ENCODE measurements at regions of chr4 and their contacts with region 1.

Region 1: GRCh38 chr4:132642016-132642817 is 506.9 kb upstream of the PCDH10 start:
- DNase-seq: peak; percentile 38 to 42
- H3K4me3 ChIP-seq: no peak overlapping the region
- H3K4me3 Mint-ChIP-seq: no peak overlapping the region
- H3K27ac Mint-ChIP-seq: no peak overlapping the region
- H3K4me1 ChIP-seq: no peaks in the 10 kb centered on the region
- H3K4me1 Mint-ChIP-seq: no peaks in the 10 kb centered on the region
- H3K27me3 ChIP-seq: no peaks in the 10 kb centered on the region
- H3K27me3 Mint-ChIP-seq: no peaks in the 10 kb centered on the region
- CTCF ChIP-seq: peak; percentile 68 to 78

Region 2: GRCh38 chr4:132076829-132077228 is 565.4 kb before region 1 on chr4:
- CTCF ChIA-PET with region 1: no interaction called
- POLR2A ChIA-PET with region 1: no interaction called
- intact Hi-C with region 1: loop called (anchors 5 kb)
- DNase-seq: no peak
- H3K4me3 ChIP-seq: no peak overlapping the region
- H3K4me3 Mint-ChIP-seq: no peak overlapping the region
- H3K27ac Mint-ChIP-seq: no peak overlapping the region
- H3K4me1 ChIP-seq: no peaks in the 10 kb centered on the region
- H3K4me1 Mint-ChIP-seq: no peaks in the 10 kb centered on the region
- H3K27me3 ChIP-seq: no peaks in the 10 kb centered on the region
- H3K27me3 Mint-ChIP-seq: no peaks in the 10 kb centered on the region
- CTCF ChIP-seq: peak in 1 of 2 experiments; percentile 10

Region 3: DNA sequence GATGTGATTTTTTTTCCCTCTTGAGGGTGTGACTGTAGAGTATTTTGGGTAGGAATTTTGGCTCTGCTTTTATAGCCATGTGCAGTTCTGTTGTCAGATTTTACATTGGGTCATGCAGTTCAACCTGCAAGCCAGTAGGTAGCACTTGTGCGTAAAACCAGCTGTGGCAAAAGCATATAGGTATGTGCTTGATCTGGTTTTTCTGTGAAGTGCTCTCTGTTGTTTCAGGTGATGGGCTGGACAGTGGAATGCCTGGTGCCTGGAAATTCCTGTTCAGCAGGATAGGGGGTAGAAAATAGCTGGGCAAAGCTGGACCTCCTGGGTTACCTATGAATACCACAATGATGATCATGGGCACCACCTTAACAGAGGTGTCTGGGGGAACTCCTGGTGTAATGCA is 77.3 kb before region 1 on chr4:
- CTCF ChIA-PET with region 1: no interaction called
- POLR2A ChIA-PET with region 1: no interaction called
- intact Hi-C with region 1: loop called (anchors 1 kb)
- DNase-seq: peak in 1 of 2 experiments; percentile 15
- H3K4me3 ChIP-seq: no peak overlapping the region
- H3K4me3 Mint-ChIP-seq: no peak overlapping the region
- H3K27ac Mint-ChIP-seq: no peak overlapping the region
- H3K4me1 ChIP-seq: no peaks in the 10 kb centered on the region
- H3K4me1 Mint-ChIP-seq: no peaks in the 10 kb centered on the region
- H3K27me3 ChIP-seq: no peaks in the 10 kb centered on the region
- H3K27me3 Mint-ChIP-seq: no peaks in the 10 kb centered on the region
- CTCF ChIP-seq: peak in 1 of 2 experiments; percentile 28

Region 4: DNA sequence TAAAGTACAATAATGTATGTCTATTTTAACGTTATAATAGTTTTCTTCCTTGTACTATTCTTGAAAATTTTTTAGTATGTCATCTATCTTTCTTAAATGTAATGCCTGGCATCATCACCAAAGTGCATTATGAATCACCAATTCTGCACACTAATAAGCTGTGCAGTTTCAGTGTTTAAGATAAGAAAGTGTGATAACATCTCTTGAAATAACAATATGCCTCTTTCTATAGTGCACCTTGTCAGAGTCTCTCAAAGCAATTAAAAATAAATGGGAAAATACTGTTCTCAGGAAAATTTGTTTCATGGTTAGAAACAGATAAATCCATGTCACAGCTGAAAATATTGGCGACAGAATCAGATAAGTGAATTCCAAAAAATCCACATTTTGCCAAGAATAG is 49.5 kb after region 1 on chr4:
- CTCF ChIA-PET with region 1: no interaction called
- POLR2A ChIA-PET with region 1: no interaction called
- intact Hi-C with region 1: no loop called
- DNase-seq: no peak
- H3K4me3 ChIP-seq: no peak overlapping the region
- H3K4me3 Mint-ChIP-seq: no peak overlapping the region
- H3K27ac Mint-ChIP-seq: no peak overlapping the region
- H3K4me1 ChIP-seq: no peaks in the 10 kb centered on the region
- H3K4me1 Mint-ChIP-seq: no peaks in the 10 kb centered on the region
- H3K27me3 ChIP-seq: no peaks in the 10 kb centered on the region
- H3K27me3 Mint-ChIP-seq: no peaks in the 10 kb centered on the region
- CTCF ChIP-seq: no peak